ENCODE measurements at regions of chr2 and their contacts with region 1.

Region 1: GRCh38 chr2:636641-637405 is 40.4 kb downstream of the TMEM18 start:
- DNase-seq: peak; percentile 42 to 78 (median 66)
- ATAC-seq: peak in 3 of 4 donors; percentile 62 to 84 (median 67)
- H3K4me3 ChIP-seq: peak overlapping the region in 11 of 12 donors; percentile 11 to 53 (median 41)
- H3K27ac ChIP-seq: no peak overlapping the region
- H3K4me1 ChIP-seq: peaks cover 0 to 13% (median 4%) of the 10 kb centered on the region in 12 donors
- H3K27me3 ChIP-seq: peaks cover 0 to 18% (median 9%) of the 10 kb centered on the region in 9 donors
- CTCF ChIP-seq: peak; percentile 77 to 88 (median 82)
- POLR2A ChIP-seq: no peak

Region 2: GRCh38 chr2:169741-170140 is 467.1 kb before region 1 on chr2:
- intact Hi-C with region 1: loop called in 1 of 10 experiments (anchors 5 kb)
- DNase-seq: no peak
- ATAC-seq: no peak
- H3K4me3 ChIP-seq: no peak overlapping the region
- H3K27ac ChIP-seq: no peak overlapping the region
- H3K4me1 ChIP-seq: no peaks in the 10 kb centered on the region
- H3K27me3 ChIP-seq: peaks cover 0 to 19% (median 0%) of the 10 kb centered on the region in 9 donors
- CTCF ChIP-seq: no peak
- POLR2A ChIP-seq: no peak

Region 3: DNA sequence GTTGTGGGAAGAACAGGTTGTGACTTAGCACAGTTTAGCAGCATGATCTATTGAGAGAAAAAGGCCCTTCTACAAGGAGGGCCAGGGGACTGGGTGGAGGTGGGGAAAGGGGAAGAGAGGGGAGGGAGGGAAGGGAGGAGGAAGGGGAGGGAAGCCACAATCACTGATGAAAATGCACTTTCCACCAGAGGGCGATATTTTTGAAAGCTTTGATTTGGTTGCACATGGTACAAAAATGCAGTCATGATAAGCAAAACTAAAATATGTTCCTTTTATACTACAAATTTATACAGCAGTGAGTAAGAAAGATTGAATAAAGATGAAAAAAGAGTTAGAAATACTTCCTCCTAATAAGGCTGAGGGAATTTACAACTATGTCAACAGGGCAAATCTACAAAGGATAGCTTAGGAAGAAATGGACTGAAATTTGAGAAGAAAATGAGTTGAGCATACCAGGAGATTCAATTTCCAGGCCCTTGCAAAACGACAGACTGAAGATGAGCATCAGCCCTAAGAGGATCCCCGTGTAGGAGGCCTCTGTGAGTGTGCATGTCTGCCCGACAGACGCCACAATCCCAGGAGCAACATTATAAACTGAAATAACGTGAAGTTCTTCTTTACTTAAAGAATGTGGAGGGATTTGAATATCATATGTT is 390.2 kb before region 1 on chr2:
- intact Hi-C with region 1: loop called in 5 of 10 experiments (anchors 5 to 10 kb)
- DNase-seq: no peak
- ATAC-seq: no peak
- H3K4me3 ChIP-seq: no peak overlapping the region
- H3K27ac ChIP-seq: no peak overlapping the region
- H3K4me1 ChIP-seq: no peaks in the 10 kb centered on the region
- H3K27me3 ChIP-seq: no peaks in the 10 kb centered on the region
- CTCF ChIP-seq: peak; percentile 25 to 61 (median 46)
- POLR2A ChIP-seq: no peak

Region 4: DNA sequence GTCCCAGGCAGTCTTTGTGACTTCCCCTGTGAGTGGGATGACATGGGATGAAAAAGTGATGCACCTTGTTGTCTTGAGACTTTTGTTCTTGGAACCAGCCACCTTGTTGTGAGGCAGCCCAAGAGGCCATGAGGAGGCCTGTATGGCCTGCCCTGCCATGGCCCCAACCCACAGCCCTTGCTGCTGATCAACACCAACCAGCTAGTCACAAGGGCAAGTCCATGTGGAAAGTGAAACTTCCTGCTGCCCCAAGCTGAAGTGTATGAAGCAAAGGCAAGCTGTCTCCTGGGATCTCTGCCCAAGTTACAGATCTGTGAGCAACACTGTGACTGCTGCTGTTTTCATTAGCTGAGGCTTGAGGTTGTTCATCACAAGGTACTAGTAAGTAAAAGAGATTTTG is 18.8 kb after region 1 on chr2:
- intact Hi-C with region 1: no loop called
- DNase-seq: peak in 1 of 5 donors; percentile 2
- ATAC-seq: no peak
- H3K4me3 ChIP-seq: no peak overlapping the region
- H3K27ac ChIP-seq: no peak overlapping the region
- H3K4me1 ChIP-seq: peaks cover 0 to 3% (median 0%) of the 10 kb centered on the region in 12 donors
- H3K27me3 ChIP-seq: peaks cover 0 to 29% (median 2%) of the 10 kb centered on the region in 9 donors
- CTCF ChIP-seq: no peak
- POLR2A ChIP-seq: no peak

Region 5: DNA sequence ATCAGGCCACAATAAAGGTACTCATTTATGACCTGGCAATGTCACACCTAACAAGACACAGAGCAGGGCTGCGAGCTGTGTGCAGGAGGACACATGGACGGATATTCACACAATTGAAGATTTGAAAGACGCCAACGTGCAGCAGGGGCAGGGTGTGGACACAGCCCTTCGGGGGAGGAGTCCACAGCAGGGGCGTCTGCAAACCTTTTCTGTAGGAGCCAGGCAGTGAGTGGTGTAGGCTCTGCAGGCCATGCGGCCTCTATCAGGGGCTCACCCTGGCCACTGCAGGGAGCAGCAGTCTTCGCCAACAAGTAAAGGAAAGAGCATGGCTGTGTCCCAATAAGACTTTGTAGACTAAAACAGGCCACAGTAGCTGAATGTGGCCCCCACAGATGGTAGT is 188.1 kb after region 1 on chr2:
- intact Hi-C with region 1: no loop called
- DNase-seq: no peak
- ATAC-seq: no peak
- H3K4me3 ChIP-seq: no peak overlapping the region
- H3K27ac ChIP-seq: no peak overlapping the region
- H3K4me1 ChIP-seq: peaks cover 0 to 9% (median 1%) of the 10 kb centered on the region in 12 donors
- H3K27me3 ChIP-seq: peaks cover 0 to 6% (median 0%) of the 10 kb centered on the region in 9 donors
- CTCF ChIP-seq: no peak
- POLR2A ChIP-seq: no peak

Measured in heart left ventricle (tissue), 16 donors.